ENCODE measurements at regions of chr6 and their contacts with region 1.

Region 1: DNA sequence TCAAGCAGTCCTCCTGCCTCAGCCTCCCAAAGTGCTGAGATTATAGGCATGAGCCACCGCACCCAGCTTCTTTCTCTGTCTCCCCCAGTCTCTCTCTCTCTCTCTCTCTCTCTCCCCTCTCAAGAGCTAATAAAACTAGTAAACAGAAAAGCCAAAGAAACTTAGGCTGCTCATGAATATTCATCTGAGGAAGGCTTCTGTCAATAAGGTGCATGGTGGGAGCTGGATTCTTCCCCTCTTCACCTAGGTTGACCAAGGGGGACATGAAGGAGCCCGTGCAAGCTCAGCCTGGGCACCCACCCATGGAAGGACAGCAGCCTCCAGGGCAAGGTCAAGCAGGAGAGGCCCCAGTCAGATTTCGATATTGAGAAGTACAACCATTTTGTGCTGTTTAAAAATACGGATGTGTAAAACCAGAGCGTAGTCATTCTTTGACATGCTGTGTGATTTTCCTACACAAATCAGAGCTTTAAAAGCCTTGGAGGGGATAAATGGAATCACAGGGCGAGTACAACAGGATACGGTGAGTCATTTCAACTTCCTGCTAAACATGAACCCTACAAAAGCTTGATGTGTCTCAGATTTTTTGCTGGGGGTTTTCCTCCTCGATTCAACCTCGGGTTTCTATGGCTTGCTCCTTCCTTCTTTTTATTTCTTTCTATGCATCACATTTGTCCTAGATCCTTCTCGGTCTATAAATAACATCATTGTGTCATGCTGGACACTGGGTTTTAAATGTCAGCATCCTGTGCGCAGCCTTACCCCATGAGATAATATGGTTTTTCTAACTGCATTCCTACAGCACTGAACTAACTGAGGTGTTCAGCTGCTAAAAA is 368.9 kb upstream of the JARID2 start:
- DNase-seq: peak; percentile 48
- H3K4me3 Mint-ChIP-seq: peak overlapping the region; percentile 68
- H3K27ac Mint-ChIP-seq: peak overlapping the region; percentile 98
- H3K4me1 Mint-ChIP-seq: peaks cover 75% of the 10 kb centered on the region
- H3K27me3 Mint-ChIP-seq: no peaks in the 10 kb centered on the region

Region 2: DNA sequence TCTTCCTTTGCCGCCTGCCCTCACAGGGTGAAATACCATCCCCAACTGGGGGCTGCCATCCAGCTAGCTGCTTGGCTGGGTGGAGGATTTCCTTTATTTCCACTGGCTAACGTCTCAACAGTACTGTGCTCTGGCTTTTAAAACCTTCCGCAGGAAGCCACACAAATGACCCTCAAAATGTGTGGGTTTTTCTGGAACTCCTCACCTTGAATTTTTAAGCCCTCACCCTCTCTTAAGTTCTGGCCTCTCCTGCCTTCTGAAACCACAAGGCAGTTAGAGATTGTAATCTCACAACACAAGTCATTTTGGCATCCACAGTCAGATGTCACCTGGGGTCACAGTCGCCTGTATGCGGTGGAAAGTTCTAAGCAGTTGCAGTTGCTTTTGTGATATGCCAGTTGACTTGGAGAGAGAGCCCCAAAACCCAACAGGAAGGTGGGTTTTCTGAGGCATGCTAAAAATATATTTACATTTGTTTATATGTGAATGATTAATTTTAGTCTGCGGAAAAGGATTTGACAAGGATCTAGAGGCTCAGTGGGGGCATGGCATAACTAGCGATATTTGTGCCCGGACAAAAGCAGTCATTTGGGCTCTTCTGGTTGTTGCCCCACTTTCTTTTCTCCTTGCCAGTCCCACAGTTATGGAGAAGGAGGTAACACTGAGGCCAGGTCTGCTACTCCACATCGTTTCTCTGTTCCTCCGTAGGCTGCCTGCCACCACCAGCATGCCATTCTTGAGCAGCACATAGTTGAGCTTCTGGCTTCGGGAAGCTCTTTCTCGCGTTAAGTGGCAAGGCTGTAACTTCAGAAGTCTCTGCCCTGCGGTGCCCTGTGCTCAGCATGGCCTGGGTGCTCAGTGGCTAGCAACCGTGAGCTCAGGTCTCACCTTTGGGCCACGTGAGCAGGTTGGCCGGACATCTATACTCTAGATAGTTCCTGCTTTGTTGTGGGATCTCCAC is 424.1 kb before region 1 on chr6:
- intact Hi-C with region 1: loop called (anchors 1 kb)
- DNase-seq: peak; percentile 62
- H3K4me3 Mint-ChIP-seq: peak overlapping the region; percentile 58
- H3K27ac Mint-ChIP-seq: peak overlapping the region; percentile 91
- H3K4me1 Mint-ChIP-seq: peaks cover 88% of the 10 kb centered on the region
- H3K27me3 Mint-ChIP-seq: peaks cover 2% of the 10 kb centered on the region

Region 3: DNA sequence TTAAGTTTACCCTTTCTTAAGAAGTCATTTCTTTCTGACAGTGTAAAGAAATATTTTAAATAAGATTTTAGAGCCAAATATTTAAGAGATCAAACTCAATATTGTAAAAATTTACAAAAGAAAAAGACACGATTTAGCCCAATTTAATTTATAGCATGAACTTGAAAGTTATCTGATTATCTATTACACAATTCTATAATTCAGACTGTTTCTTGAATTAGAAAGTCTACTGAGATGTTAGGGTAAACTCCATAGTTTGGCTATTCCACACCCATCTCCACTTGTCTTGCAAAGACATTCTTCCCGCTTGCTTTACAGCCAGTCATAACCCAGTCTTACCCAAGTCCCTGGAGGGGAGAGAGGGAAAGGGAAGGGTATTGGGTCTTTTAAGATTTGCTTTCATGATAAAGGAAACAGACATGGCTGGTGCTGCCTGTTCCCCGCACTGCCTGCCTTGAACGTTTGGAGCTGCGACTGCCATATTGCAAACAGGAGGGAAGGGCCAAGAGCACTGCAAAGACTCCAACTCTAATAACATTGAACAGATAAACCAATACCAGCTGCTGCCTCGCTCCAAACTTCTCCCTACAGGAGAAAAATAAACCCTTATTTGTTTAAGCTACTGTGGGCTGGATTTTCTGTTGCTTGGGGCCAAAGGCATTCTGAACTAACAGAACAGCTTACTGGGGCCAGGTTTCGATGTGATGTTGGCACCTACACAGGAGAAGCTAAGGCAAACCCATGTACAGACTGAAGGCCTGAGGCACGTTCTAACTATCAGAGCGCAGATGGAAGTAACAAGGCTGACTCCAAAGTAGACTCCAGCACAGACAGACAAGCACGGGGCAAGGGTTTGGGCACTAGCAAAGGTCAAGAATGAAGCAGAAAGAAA is 183.4 kb before region 1 on chr6:
- intact Hi-C with region 1: no loop called
- DNase-seq: no peak
- H3K4me3 Mint-ChIP-seq: no peak overlapping the region
- H3K27ac Mint-ChIP-seq: no peak overlapping the region
- H3K4me1 Mint-ChIP-seq: no peaks in the 10 kb centered on the region
- H3K27me3 Mint-ChIP-seq: peaks cover 2% of the 10 kb centered on the region

Region 4: GRCh38 chr6:14816116-14816859 is 60.7 kb before region 1 on chr6:
- intact Hi-C with region 1: loop called (anchors 1 kb)
- DNase-seq: no peak
- H3K4me3 Mint-ChIP-seq: no peak overlapping the region
- H3K27ac Mint-ChIP-seq: no peak overlapping the region
- H3K4me1 Mint-ChIP-seq: peaks cover 22% of the 10 kb centered on the region
- H3K27me3 Mint-ChIP-seq: peaks cover 3% of the 10 kb centered on the region

Region 5: GRCh38 chr6:14953836-14954235 is 76.8 kb after region 1 on chr6:
- intact Hi-C with region 1: no loop called
- DNase-seq: no peak
- H3K4me3 Mint-ChIP-seq: no peak overlapping the region
- H3K27ac Mint-ChIP-seq: no peak overlapping the region
- H3K4me1 Mint-ChIP-seq: no peaks in the 10 kb centered on the region
- H3K27me3 Mint-ChIP-seq: no peaks in the 10 kb centered on the region

Region 6: DNA sequence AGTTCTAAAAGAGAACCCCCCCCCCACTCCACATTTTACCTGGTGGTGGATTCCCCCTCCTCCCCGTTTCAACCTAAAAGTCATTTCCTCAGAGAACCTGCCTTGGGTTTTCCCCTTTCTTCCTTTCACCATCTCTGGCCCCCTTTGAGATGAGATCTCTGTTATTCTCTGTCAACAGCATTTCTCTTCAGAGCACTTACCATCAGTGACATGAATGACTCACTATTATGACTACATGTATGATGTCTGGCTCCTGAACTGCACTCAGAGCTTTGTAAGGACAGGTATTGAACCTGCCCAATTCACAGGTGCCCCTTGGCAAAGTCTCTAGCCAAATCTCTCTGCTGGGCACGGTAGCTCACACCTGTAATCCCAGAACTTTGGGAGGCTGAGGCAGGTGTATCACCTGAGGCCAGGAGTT is 307.5 kb after region 1 on chr6:
- intact Hi-C with region 1: loop called (anchors 1 kb)
- DNase-seq: peak; percentile 25
- H3K4me3 Mint-ChIP-seq: no peak overlapping the region
- H3K27ac Mint-ChIP-seq: peak overlapping the region; percentile 94
- H3K4me1 Mint-ChIP-seq: peaks cover 16% of the 10 kb centered on the region
- H3K27me3 Mint-ChIP-seq: no peaks in the 10 kb centered on the region

Region 7: GRCh38 chr6:15317934-15318902 is 441.2 kb after region 1 on chr6:
- intact Hi-C with region 1: loop called (anchors 5 kb)
- DNase-seq: no peak
- H3K4me3 Mint-ChIP-seq: peak overlapping the region; percentile 43
- H3K27ac Mint-ChIP-seq: peak overlapping the region; percentile 85
- H3K4me1 Mint-ChIP-seq: peaks cover 94% of the 10 kb centered on the region
- H3K27me3 Mint-ChIP-seq: no peaks in the 10 kb centered on the region

Measured in activated T-helper 1 cell treated with anti-CD3 and anti-CD28 coated beads, Interleukin-12 subunit alpha, Interleukin-12 subunit beta, Interleukin-2, Interleukin-4 antibody, amounts not matched to agents 30 ng/mL and 10 ng/mL and 1 ng/mL, durations not matched to agents 14 hours and 24 hours and 36 hours (primary cell).